ENCODE measurements at regions of chr3 and their contacts with region 1.

Region 1: DNA sequence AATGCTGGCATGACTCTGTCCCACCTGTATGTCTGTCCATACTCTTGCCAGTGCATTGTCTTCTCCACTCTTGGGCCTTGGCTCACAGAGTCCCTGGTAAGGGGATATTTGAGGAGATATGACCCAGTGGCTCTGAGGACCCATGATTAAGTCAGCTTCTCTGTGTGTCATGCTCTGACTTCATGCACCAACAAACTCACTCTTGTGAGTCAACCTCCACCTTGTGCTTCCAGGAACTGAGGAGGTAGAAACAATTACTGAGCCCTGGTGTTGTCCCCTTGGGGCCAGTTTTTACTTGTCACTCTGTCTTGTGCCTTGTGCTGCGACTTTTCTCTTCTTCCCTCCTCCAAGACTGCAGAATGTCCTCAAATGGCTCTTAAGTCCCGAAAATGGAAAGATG is 127.1 kb downstream of the ABHD5 start:
- DNase-seq: no peak

Region 2: GRCh38 chr3:43024181-43024885 is 793.5 kb before region 1 on chr3:
- intact Hi-C with region 1: no loop called
- DNase-seq: no peak

Region 3: DNA sequence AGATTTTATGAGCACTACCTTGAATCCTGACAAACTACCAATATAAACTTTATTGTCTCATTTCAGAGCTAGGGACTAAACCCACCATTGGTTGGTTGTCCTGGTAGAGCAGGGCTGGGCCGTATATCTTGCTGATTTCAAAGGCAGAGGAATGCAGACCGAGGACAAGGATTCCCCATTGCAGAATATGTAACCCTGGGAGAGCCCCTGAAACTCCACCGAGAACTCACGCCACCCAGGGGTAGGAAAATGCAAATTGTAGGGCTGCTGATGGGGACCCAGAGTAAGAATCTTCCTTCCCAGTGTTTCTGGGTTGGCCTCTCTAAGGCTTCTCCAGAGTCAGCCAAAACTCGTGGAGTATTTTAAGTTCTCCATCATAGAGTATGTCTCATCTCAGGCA is 108.2 kb after region 1 on chr3:
- intact Hi-C with region 1: loop called in 1 of 2 experiments (anchors 5 kb)
- DNase-seq: no peak